ENCODE measurements at regions of chr1 and their contacts with region 1.

Region 1: GRCh38 chr1:48061162-48062136 is 64.3 kb upstream of the TRABD2B start:
- DNase-seq: no peak
- H3K4me3 ChIP-seq: no peak overlapping the region
- H3K27ac ChIP-seq: no peak overlapping the region
- H3K4me1 ChIP-seq: no peaks in the 10 kb centered on the region
- H3K27me3 ChIP-seq: no peaks in the 10 kb centered on the region
- CTCF ChIP-seq: peak; percentile 58 to 69 (median 66)

Region 2: GRCh38 chr1:47997289-47998200 is 63.9 kb before region 1 on chr1 and contains the start of gene TRABD2B:
- dilution Hi-C with region 1: loop called (anchors 10 kb)
- DNase-seq: no peak
- H3K4me3 ChIP-seq: peak within 1 kb of the TSS; percentile 53 to 66 (median 57)
- H3K27ac ChIP-seq: no peak within 1 kb of the TSS
- H3K4me1 ChIP-seq: peaks cover 19% of the 10 kb centered on the region
- H3K27me3 ChIP-seq: peaks cover 7% of the 10 kb centered on the region
- CTCF ChIP-seq: peak; percentile 60 to 89 (median 87)
- polyA plus RNA-seq, gene TRABD2B: 0.13 to 0.35 TPM (median 0.16 TPM) in 3 replicates